ENCODE measurements at regions of chr20 and their contacts with region 1.

Region 1: DNA sequence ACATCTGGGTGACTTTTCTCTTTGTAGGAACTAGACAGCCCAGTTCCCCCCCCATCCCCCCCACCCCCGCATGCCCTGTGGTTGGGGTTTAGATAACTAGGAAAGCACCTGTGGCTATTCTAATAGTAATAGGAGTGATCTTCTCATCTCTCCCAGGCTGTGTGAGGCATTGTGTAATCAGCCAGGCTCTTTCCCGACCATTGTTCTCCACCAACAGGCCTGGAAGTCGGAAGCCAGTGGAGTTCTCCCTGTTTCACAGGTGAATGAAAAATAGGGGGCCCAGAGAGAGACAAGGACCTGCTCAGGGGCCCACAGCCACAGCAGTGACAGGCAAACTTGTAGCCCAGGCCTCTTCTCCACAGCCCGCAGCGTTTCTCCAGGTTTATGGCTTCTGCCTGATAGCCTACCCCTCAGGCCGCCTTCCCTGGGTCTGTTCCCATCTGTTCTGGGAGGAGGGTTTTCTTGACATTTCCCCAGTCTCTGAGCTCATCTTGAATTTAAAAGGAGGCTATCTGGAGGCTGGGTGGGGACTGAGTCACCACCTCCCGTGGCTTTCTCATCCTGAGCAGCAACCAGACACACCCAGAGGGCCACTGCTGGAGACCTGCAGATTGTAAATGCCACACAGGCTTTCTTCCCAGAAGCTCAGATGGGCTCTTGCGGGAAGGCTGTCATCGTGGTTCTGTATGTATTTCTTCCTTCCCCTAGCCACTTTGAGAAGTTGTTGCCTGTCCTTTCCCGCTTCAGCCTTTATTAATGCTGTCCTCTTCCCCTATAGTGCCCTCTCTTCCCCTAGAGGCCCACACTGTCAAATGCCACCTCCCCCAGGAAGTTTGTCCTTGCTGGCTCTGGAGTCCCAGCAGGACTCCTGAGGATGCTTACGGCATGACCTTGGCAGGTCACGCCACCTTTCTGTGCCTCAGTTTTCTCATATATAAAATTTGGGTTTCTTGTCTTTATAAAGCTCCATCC is 75.9 kb upstream of the MYL9 start:
- DNase-seq: no peak
- H3K4me3 Mint-ChIP-seq: peak overlapping the region; percentile 44
- H3K27ac Mint-ChIP-seq: peak overlapping the region; percentile 60
- H3K4me1 Mint-ChIP-seq: peaks cover 71% of the 10 kb centered on the region
- H3K27me3 Mint-ChIP-seq: no peaks in the 10 kb centered on the region

Region 2: DNA sequence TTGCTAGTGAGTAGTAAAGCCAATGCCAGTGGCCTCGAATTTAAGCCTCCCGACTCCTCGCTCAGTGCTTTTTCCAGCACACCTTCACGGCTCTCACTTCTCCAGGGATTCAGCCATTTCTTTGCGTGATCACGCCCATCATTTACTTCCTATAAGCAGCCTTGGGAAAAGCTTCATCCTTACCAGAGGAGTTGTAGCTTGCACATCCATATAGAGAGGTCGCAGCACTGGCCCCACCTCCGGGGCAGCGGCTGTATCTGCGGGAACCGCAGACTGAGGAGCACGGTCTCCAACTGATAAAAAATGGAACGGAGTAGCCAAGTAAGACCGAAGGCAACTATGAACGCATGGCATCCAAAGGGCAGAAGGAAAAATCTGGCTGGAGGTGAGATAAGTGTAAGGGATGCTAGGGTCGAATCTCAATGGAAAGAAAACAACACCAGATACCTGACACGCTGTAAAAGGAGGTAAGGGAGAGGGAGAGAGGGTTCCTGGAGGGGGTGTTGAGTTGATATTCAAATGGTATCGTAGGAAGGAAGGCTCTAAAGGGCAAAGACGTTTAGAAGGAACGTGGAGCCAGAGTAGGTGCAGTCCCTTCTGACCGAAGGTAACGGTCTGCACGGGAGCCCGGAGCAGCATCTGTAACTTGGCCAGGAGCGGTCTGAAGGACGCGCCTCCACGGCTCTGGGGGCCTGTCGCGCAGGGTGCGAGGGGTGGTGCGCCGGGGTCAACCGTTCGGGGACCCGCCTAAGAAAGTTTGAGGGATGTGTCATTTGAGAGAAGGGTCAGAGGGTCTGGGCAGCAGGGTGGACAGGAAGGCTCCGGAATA is 766.9 kb before region 1 on chr20:
- intact Hi-C with region 1: no loop called
- DNase-seq: no peak
- H3K4me3 Mint-ChIP-seq: peak overlapping the region; percentile 94
- H3K27ac Mint-ChIP-seq: peak overlapping the region; percentile 89
- H3K4me1 Mint-ChIP-seq: peaks cover 26% of the 10 kb centered on the region
- H3K27me3 Mint-ChIP-seq: no peaks in the 10 kb centered on the region

Region 3: GRCh38 chr20:36235892-36236785 is 229.3 kb before region 1 on chr20 and contains the start of gene AAR2:
- intact Hi-C with region 1: no loop called
- DNase-seq: peak; percentile 75
- H3K4me3 Mint-ChIP-seq: peak within 1 kb of the TSS; percentile 82
- H3K27ac Mint-ChIP-seq: peak within 1 kb of the TSS; percentile 86
- H3K4me1 Mint-ChIP-seq: peaks cover 22% of the 10 kb centered on the region
- H3K27me3 Mint-ChIP-seq: no peaks in the 10 kb centered on the region
- total RNA-seq, gene AAR2: 27.1 and 28.5 TPM in 2 replicates

Region 4: GRCh38 chr20:36421641-36422040 is 43.8 kb before region 1 on chr20:
- intact Hi-C with region 1: no loop called
- DNase-seq: no peak
- H3K4me3 Mint-ChIP-seq: no peak overlapping the region
- H3K27ac Mint-ChIP-seq: no peak overlapping the region
- H3K4me1 Mint-ChIP-seq: no peaks in the 10 kb centered on the region
- H3K27me3 Mint-ChIP-seq: peaks cover 2% of the 10 kb centered on the region

Region 5: GRCh38 chr20:36493013-36493800 is 27.8 kb after region 1 on chr20:
- intact Hi-C with region 1: loop called (anchors 2 kb)
- DNase-seq: no peak
- H3K4me3 Mint-ChIP-seq: no peak overlapping the region
- H3K27ac Mint-ChIP-seq: peak overlapping the region; percentile 28
- H3K4me1 Mint-ChIP-seq: peaks cover 28% of the 10 kb centered on the region
- H3K27me3 Mint-ChIP-seq: no peaks in the 10 kb centered on the region

Region 6: DNA sequence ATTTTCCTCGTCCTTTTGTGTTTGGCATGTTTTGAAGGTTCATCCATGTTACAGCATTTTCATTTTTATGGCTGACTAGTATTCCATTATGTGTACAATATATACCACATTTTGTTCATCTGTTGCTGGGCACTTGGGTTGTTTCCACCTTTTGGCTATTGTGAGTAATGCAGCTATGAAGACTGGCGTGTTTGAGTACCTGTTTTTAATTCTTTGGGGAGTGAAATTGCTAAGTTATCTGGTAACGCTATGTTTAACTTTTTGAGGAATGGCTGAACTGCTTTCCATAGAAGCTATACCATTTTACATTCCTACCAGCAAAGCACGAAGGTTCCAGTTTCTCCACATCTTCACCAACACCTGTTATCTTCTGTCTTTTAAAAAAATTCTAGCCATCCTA is 38.9 kb after region 1 on chr20:
- intact Hi-C with region 1: no loop called
- DNase-seq: no peak
- H3K4me3 Mint-ChIP-seq: no peak overlapping the region
- H3K27ac Mint-ChIP-seq: no peak overlapping the region
- H3K4me1 Mint-ChIP-seq: peaks cover 8% of the 10 kb centered on the region
- H3K27me3 Mint-ChIP-seq: no peaks in the 10 kb centered on the region

Region 7: GRCh38 chr20:36519944-36520343 is 54.5 kb after region 1 on chr20:
- intact Hi-C with region 1: loop called (anchors 2 kb)
- DNase-seq: no peak
- H3K4me3 Mint-ChIP-seq: no peak overlapping the region
- H3K27ac Mint-ChIP-seq: peak overlapping the region; percentile 87
- H3K4me1 Mint-ChIP-seq: peaks cover 20% of the 10 kb centered on the region
- H3K27me3 Mint-ChIP-seq: no peaks in the 10 kb centered on the region

Region 8: GRCh38 chr20:36591854-36592641 is 126.7 kb after region 1 on chr20:
- intact Hi-C with region 1: loop called (anchors 5 kb)
- DNase-seq: peak; percentile 44
- H3K4me3 Mint-ChIP-seq: peak overlapping the region; percentile 48
- H3K27ac Mint-ChIP-seq: peak overlapping the region; percentile 62
- H3K4me1 Mint-ChIP-seq: peaks cover 54% of the 10 kb centered on the region
- H3K27me3 Mint-ChIP-seq: no peaks in the 10 kb centered on the region

Measured in activated T-helper 2 cell treated with anti-CD3 and anti-CD28 coated beads, Interferon-gamma antibody, Interleukin-2, Interleukin-4, amounts not matched to agents 10 μg/mL and 5 μg/mL and 100 μg/mL, durations not matched to agents 14 hours and 24 hours and 36 hours (primary cell).